Activated CD4-positive, alpha-beta T cell treated with anti-CD3 and anti-CD28 coated beads, Interleukin-2, amount 10 ng/mL, durations not matched to agents 7 days and 5 days (primary cell): ENCODE measurements at regions of chr15 and their contacts with region 1.

Region 1: DNA sequence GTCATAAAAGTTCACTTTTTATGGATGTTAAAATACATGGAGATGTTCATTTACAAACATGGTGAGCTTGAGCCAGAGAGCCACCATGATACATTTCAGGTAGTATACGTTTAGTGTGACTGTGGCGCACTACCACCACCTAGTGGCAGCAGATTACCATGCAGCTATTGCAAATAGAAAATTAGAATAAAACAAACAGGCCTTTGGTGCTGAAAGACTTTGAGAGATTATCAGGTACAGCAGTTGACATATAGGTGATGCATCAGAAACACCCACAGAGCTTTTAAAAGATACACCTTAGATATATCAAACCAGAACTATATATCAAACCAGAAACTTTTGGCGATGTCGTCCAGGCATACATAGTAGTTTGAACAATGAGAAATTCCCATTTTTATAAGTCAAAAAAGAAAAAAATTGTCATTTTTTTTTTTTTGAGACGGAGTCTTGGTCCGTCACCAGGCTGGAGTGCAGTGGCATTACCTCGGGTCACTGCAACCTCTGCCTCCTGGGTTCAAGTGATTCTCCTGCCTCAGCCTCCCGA is 42.0 kb upstream of the ICE2 start:
- DNase-seq: peak; percentile 86
- H3K4me3 Mint-ChIP-seq: no peak overlapping the region
- H3K27ac Mint-ChIP-seq: peak overlapping the region; percentile 11
- H3K4me1 Mint-ChIP-seq: peaks cover 30% of the 10 kb centered on the region
- H3K27me3 Mint-ChIP-seq: no peaks in the 10 kb centered on the region

Region 2: GRCh38 chr15:60110909-60111308 is 410.0 kb before region 1 on chr15:
- CTCF ChIA-PET with region 1: no interaction called
- POLR2A ChIA-PET with region 1: no interaction called
- DNase-seq: no peak
- H3K4me3 Mint-ChIP-seq: no peak overlapping the region
- H3K27ac Mint-ChIP-seq: no peak overlapping the region
- H3K4me1 Mint-ChIP-seq: peaks cover 2% of the 10 kb centered on the region
- H3K27me3 Mint-ChIP-seq: peaks cover 7% of the 10 kb centered on the region

Region 3: GRCh38 chr15:60362321-60363086 is 158.4 kb before region 1 on chr15:
- CTCF ChIA-PET with region 1: interaction called, 31 read pairs
- POLR2A ChIA-PET with region 1: no interaction called
- DNase-seq: peak; percentile 47
- H3K4me3 Mint-ChIP-seq: no peak overlapping the region
- H3K27ac Mint-ChIP-seq: peak overlapping the region; percentile 80
- H3K4me1 Mint-ChIP-seq: peaks cover 39% of the 10 kb centered on the region
- H3K27me3 Mint-ChIP-seq: no peaks in the 10 kb centered on the region

Region 4: DNA sequence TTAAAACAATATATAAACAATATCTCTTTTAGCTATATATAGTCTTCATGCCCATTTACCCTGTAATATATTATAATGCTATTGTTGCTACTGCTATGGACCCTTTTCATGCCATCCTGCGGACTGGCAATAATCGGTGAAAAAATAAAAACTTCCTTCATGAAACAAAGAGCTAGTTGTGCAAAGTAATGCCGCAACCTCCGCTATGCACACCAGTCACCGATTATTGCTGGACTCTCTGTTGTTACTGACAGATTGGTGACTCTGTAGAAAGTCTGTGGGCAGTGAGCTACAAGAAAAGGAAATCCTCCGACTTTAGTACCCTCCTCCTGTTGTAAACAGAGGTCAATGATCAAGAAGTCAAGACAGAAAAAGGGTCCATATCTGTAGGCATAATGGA is 24.0 kb before region 1 on chr15:
- CTCF ChIA-PET with region 1: interaction called, 12 read pairs
- POLR2A ChIA-PET with region 1: no interaction called
- DNase-seq: no peak
- H3K4me3 Mint-ChIP-seq: no peak overlapping the region
- H3K27ac Mint-ChIP-seq: peak overlapping the region; percentile 9
- H3K4me1 Mint-ChIP-seq: peaks cover 12% of the 10 kb centered on the region
- H3K27me3 Mint-ChIP-seq: no peaks in the 10 kb centered on the region

Region 5: DNA sequence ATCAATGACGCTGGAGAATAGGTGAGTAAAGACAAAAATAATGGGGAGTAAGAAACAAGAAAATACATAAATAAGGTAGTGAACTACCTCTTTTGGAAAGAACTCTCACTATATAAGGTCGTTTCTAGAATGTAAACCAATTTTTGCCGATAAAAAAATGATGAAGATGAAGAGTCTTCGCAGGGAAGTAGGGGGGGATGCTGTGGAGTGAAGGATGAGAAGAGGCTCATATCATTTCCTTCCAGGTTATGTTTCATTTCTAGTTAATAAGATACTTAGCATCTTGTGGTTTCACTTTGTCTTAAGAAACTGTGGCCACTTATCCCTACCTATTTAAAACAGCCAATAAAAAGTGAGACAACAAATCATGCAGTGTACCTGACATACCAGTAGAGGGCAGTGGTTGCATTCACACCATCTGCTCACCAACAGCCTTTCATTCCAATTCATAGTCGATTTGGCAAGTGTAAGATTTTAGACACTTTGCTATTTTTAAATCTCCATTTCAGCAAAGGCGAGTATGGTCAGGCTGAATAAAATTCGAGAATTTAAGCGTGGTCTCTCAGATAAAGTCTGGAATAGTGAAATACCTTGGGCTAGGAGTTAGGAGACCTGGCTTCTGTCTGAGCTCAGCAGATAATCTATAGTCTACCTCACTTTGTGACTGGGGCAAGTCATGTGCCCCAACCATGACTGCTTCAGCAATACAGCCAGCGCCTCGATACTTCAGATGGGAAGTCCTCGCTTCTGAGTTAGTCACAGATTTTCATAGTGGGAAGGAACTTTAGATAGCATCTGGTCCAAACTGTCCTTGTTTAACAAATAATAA is 13.1 kb before region 1 on chr15:
- CTCF ChIA-PET with region 1: interaction called, 12 read pairs
- POLR2A ChIA-PET with region 1: no interaction called
- DNase-seq: peak; percentile 64
- H3K4me3 Mint-ChIP-seq: peak overlapping the region; percentile 8
- H3K27ac Mint-ChIP-seq: peak overlapping the region; percentile 67
- H3K4me1 Mint-ChIP-seq: peaks cover 48% of the 10 kb centered on the region
- H3K27me3 Mint-ChIP-seq: no peaks in the 10 kb centered on the region

Region 6: DNA sequence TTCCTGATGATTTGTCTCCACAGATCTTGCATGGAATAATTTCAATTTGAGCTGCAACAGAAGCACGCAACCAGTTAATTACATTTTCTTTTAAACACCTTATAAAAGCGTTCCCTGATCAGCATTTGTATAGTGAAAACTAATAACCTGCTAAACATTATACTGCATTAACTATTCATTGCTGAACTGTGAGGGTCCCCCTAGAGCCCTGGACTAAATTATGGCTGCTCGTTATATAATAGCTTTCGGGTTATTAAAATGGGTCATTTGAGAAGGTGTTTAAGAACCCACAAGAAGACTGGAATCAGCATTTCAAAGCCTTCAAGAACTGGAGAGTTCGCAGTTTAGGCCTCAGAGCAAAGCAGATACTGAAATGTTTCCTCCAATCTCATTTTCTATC is 10.9 kb after region 1 on chr15:
- CTCF ChIA-PET with region 1: interaction called, 23 read pairs
- POLR2A ChIA-PET with region 1: no interaction called
- DNase-seq: no peak
- H3K4me3 Mint-ChIP-seq: no peak overlapping the region
- H3K27ac Mint-ChIP-seq: no peak overlapping the region
- H3K4me1 Mint-ChIP-seq: peaks cover 16% of the 10 kb centered on the region
- H3K27me3 Mint-ChIP-seq: no peaks in the 10 kb centered on the region

Region 7: DNA sequence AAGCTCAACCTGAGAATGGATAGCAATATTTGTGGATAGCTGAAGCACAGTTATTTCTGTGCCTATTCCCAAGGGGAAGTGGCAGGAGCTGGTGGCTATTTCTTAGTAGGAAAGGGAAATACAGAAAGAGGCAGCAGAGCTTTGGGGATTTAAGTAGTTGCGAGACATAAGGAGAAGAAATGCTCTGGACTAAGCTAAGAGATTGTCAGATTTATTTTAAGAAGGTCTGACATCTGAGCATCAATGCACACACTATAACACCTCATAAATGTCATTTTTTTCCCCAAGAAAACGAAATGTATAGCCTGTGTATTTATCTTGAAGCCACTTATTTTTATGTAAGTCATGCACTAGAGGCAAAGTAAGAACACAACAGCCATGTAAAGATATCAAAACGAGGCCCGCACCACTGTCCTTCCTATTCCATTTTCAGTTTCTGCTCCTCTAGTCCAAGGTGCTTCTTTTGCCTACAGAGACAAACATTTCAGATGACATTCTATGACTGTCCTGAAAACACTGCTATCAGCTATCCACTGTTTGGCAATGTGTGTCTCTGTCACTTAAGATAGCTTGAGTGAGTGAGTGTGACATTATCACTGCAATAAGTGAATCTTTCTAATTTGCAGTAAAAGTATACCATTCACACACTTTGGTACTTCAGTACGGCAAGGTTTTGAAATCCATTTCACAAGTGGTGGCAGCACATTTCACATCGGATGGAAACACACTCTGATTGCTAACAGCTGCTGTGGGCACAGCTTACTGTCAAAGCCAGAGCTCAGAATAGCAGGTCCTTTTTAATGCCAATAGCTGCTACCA is 20.8 kb after region 1 on chr15:
- CTCF ChIA-PET with region 1: interaction called, 13 read pairs
- POLR2A ChIA-PET with region 1: interaction called, 3 read pairs
- DNase-seq: no peak
- H3K4me3 Mint-ChIP-seq: no peak overlapping the region
- H3K27ac Mint-ChIP-seq: peak overlapping the region; percentile 58
- H3K4me1 Mint-ChIP-seq: peaks cover 84% of the 10 kb centered on the region
- H3K27me3 Mint-ChIP-seq: no peaks in the 10 kb centered on the region